GM12878 (cell line): ENCODE measurements at regions of chr5 and their contacts with region 1.

Region 1: GRCh38 chr5:96896806-96897205 is 20.5 kb downstream of the ERAP2 start:
- DNase-seq: no peak
- ATAC-seq: peak; percentile 98
- H3K4me3 ChIP-seq: 0 out of 2 replicates have a peak overlapping the region, but pooled peaks have one; percentile 15
- H3K27ac ChIP-seq: peak overlapping the region; percentile 68
- H3K4me1 ChIP-seq: peaks cover 10% of the 10 kb centered on the region; the same call in 1 of the 2 replicates
- H3K27me3 ChIP-seq: no peaks in the 10 kb centered on the region
- CTCF ChIP-seq: peak in 1 of 3 experiments; percentile 33; a peak in 2 of 6 replicates
- EP300 ChIP-seq: peak; percentile 56 to 64; a peak in 2 of 4 replicates
- POLR2A ChIP-seq: no peak
- RAD21 ChIP-seq: peak; percentile 31; the same call in 1 of the 2 replicates

Region 2: DNA sequence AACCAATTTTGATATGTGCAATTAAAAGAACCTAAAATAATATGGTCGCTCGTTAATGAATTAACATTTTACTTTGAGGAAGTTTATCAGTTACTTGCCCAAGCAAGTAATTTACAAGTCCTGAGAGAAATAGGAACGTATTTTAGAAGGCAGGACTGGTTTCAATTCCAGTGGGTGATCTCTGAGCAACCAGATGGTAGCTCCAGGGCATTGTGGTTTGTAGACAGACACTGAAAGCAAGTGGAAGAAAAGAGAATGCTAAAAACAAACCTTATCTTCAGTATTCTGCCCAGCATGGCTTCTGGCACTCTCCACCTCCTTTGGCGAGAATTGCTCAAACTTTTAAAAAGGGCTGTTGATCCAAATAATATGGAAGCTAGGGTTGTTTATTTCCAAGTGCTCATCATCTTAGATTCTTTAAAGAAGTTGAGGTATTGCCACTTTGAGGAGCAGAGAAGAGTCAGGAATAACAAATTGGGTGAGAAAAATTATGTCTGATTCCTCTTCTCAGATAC is 52.3 kb before region 1 on chr5:
- CTCF ChIA-PET with region 1: no interaction called
- POLR2A ChIA-PET with region 1: no interaction called
- RAD21 ChIA-PET with region 1: no interaction called
- SMC1A ChIA-PET with region 1: no interaction called
- in situ Hi-C with region 1: no loop called
- intact Hi-C with region 1: no loop called
- DNase-seq: no peak
- ATAC-seq: no peak
- H3K4me3 ChIP-seq: no peak overlapping the region
- H3K27ac ChIP-seq: no peak overlapping the region
- H3K4me1 ChIP-seq: no peaks in the 10 kb centered on the region
- H3K27me3 ChIP-seq: no peaks in the 10 kb centered on the region
- CTCF ChIP-seq: no peak
- EP300 ChIP-seq: no peak
- POLR2A ChIP-seq: no peak
- RAD21 ChIP-seq: no peak

Region 3: DNA sequence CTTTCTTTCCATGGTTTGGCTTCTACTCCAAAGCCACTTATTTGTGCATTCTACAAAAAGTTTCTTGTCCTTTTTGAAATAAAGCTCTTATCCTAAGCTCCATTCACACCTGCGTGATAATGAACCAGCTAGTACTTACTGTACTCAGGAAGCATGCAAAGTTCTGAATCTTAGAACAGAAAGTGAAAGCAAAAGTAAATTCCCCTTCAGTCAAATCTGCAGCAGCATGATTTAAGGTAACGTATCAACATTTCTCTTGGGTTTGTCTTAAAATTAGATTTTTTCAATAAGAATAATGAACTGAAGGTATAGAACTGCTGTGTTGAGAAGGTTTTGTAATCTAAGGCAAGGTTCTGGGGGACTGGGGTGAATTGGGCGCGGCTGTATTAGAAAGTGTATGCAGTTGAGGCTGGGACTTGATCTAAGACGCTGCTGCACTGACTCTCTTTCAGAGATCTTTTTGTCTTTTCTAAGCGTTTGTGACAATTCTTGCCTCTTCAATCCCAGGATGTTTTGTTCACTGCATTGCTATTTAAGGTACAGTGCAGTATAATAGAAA is 20.4 kb before region 1 on chr5 and contains the start of gene ERAP2:
- CTCF ChIA-PET with region 1: interaction called, 167 read pairs
- POLR2A ChIA-PET with region 1: interaction called, 31 read pairs
- RAD21 ChIA-PET with region 1: interaction called, 134 read pairs
- SMC1A ChIA-PET with region 1: interaction called, 140 read pairs
- in situ Hi-C with region 1: no loop called
- intact Hi-C with region 1: no loop called
- DNase-seq: no peak
- ATAC-seq: peak; percentile 58
- H3K4me3 ChIP-seq: peak within 1 kb of the TSS; percentile 86
- H3K27ac ChIP-seq: peak within 1 kb of the TSS; percentile 86
- H3K4me1 ChIP-seq: peaks cover 33% of the 10 kb centered on the region
- H3K27me3 ChIP-seq: no peaks in the 10 kb centered on the region
- CTCF ChIP-seq: no peak
- EP300 ChIP-seq: peak in 1 of 2 experiments; percentile 35; a peak in 1 of 4 replicates
- POLR2A ChIP-seq: no peak
- RAD21 ChIP-seq: no peak
- polyA plus RNA-seq, gene ERAP2: 4.0 to 4.3 TPM

Region 4: GRCh38 chr5:96885518-96886338 is 11.1 kb before region 1 on chr5:
- CTCF ChIA-PET with region 1: interaction called, 10 read pairs
- POLR2A ChIA-PET with region 1: interaction called, 31 read pairs
- RAD21 ChIA-PET with region 1: interaction called, 18 read pairs
- SMC1A ChIA-PET with region 1: interaction called, 82 read pairs
- in situ Hi-C with region 1: no loop called
- intact Hi-C with region 1: loop called (anchors 1 kb)
- DNase-seq: peak; percentile 92
- ATAC-seq: peak; percentile 88
- H3K4me3 ChIP-seq: peak overlapping the region; percentile 31
- H3K27ac ChIP-seq: peak overlapping the region; percentile 71
- H3K4me1 ChIP-seq: peaks cover 33% of the 10 kb centered on the region
- H3K27me3 ChIP-seq: no peaks in the 10 kb centered on the region
- CTCF ChIP-seq: no peak
- EP300 ChIP-seq: peak; percentile 84 to 88; a peak in 2 of 4 replicates
- POLR2A ChIP-seq: no peak
- RAD21 ChIP-seq: no peak

Region 5: GRCh38 chr5:96919754-96920197 is 23.0 kb after region 1 on chr5:
- CTCF ChIA-PET with region 1: interaction called, 7 read pairs
- POLR2A ChIA-PET with region 1: interaction called, 4 read pairs
- RAD21 ChIA-PET with region 1: interaction called, 18 read pairs
- SMC1A ChIA-PET with region 1: interaction called, 17 read pairs
- in situ Hi-C with region 1: no loop called
- intact Hi-C with region 1: loop called (anchors 2 kb)
- DNase-seq: no peak
- ATAC-seq: peak; percentile 85
- H3K4me3 ChIP-seq: no peak overlapping the region
- H3K27ac ChIP-seq: peak overlapping the region; percentile 98
- H3K4me1 ChIP-seq: peaks cover 42% of the 10 kb centered on the region
- H3K27me3 ChIP-seq: no peaks in the 10 kb centered on the region
- CTCF ChIP-seq: no peak
- EP300 ChIP-seq: no peak; a peak in 1 of 4 replicates
- POLR2A ChIP-seq: no peak
- RAD21 ChIP-seq: 0 out of 2 replicates have a peak, but pooled peaks have one; percentile 2

Region 6: DNA sequence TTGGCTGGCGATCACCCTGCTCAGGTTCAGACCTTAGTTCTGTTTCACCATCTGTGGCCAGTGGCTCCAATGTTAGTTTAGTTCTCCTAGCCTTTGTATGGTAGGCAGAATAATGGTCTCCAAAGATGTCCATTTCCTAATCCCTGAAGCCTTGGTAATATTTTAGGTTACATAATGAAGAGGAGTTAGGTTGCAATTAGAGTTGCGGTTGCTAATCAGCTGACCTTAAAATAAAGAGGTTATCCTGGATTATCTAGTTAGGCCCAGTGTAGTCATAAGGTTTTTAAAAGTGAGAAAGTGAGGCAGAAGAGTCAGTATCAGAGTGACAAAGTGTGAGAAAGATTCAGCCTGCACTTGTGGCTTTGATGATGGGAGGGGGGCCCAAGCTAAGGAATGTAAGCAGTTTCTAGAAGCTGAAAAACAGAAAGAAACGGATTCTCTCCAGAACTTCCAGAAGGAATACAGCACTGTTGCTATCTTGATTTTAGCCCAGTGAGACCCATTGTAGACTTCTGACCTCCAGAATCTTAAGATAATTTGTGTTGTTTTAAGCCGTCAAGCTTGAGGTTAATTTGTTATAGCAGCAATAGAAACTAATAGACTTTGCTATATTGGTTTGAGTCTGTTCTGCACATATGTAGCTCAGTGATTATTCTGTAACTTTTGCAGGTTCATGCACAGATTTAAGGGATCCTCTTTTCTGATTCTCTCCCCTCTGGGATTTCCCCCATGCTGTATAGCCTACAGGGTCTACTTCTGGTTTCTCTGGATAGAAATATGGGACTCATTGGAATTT is 60.6 kb after region 1 on chr5:
- CTCF ChIA-PET with region 1: interaction called, 6 read pairs
- POLR2A ChIA-PET with region 1: interaction called, 5 read pairs
- RAD21 ChIA-PET with region 1: interaction called, 22 read pairs
- SMC1A ChIA-PET with region 1: interaction called, 16 read pairs
- in situ Hi-C with region 1: no loop called
- intact Hi-C with region 1: no loop called
- DNase-seq: peak; percentile 45
- ATAC-seq: peak; percentile 73
- H3K4me3 ChIP-seq: peak overlapping the region; percentile 72
- H3K27ac ChIP-seq: peak overlapping the region; percentile 84
- H3K4me1 ChIP-seq: peaks cover 32% of the 10 kb centered on the region
- H3K27me3 ChIP-seq: no peaks in the 10 kb centered on the region
- CTCF ChIP-seq: no peak
- EP300 ChIP-seq: 0 out of 4 replicates have a peak, but pooled peaks of 1 of the 2 experiments have one; percentile 43
- POLR2A ChIP-seq: no peak
- RAD21 ChIP-seq: no peak

Region 7: DNA sequence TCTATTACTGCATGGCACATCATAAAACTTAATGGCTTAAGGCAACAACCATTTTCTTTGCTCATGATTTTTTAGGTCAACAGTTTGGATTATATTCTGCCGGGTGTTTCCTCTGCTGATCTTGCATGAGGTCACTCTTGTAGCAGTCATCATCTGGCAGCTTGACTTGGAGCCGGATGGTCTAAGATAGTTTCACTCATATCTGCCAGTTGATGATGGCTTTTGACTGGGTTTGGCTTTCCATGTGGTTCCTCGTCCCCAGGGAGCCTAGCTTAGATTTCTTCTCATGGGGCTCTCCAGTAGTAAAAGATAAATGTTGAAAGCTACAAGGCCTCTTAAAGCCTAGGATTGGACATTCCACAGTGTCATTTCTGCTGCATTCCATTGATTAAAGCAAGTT is 66.5 kb after region 1 on chr5:
- CTCF ChIA-PET with region 1: interaction called, 6 read pairs
- POLR2A ChIA-PET with region 1: interaction called, 5 read pairs
- RAD21 ChIA-PET with region 1: interaction called, 22 read pairs
- SMC1A ChIA-PET with region 1: interaction called, 16 read pairs
- in situ Hi-C with region 1: no loop called
- intact Hi-C with region 1: no loop called
- DNase-seq: peak; percentile 33
- ATAC-seq: peak; percentile 74
- H3K4me3 ChIP-seq: peak overlapping the region; percentile 52; the same call in 1 of the 2 replicates
- H3K27ac ChIP-seq: peak overlapping the region; percentile 27
- H3K4me1 ChIP-seq: peaks cover 12% of the 10 kb centered on the region
- H3K27me3 ChIP-seq: no peaks in the 10 kb centered on the region
- CTCF ChIP-seq: no peak
- EP300 ChIP-seq: no peak
- POLR2A ChIP-seq: no peak
- RAD21 ChIP-seq: no peak

Region 8: GRCh38 chr5:96984506-96985192 is 87.8 kb after region 1 on chr5:
- CTCF ChIA-PET with region 1: no interaction called
- POLR2A ChIA-PET with region 1: no interaction called
- RAD21 ChIA-PET with region 1: interaction called, 5 read pairs
- SMC1A ChIA-PET with region 1: interaction called, 12 read pairs
- in situ Hi-C with region 1: no loop called
- intact Hi-C with region 1: no loop called
- DNase-seq: no peak
- ATAC-seq: no peak
- H3K4me3 ChIP-seq: no peak overlapping the region
- H3K27ac ChIP-seq: no peak overlapping the region
- H3K4me1 ChIP-seq: no peaks in the 10 kb centered on the region
- H3K27me3 ChIP-seq: no peaks in the 10 kb centered on the region
- CTCF ChIP-seq: no peak
- EP300 ChIP-seq: no peak
- POLR2A ChIP-seq: no peak
- RAD21 ChIP-seq: no peak